ENCODE measurements at regions of chr3 and their contacts with region 1.

Region 1: GRCh38 chr3:54146506-54147239 is 24.3 kb downstream of the CACNA2D3 start:
- DNase-seq: peak; percentile 7 to 29 (median 14)
- ATAC-seq: peak; percentile 88
- H3K4me3 ChIP-seq: no peak overlapping the region
- H3K27ac ChIP-seq: no peak overlapping the region
- H3K4me1 ChIP-seq: no peaks in the 10 kb centered on the region
- H3K27me3 ChIP-seq: no peaks in the 10 kb centered on the region
- CTCF ChIP-seq: peak; percentile 47 to 65 (median 54); a peak in 5 of 6 replicates
- EP300 ChIP-seq: no peak
- POLR2A ChIP-seq: no peak
- RAD21 ChIP-seq: peak in 1 of 2 experiments; percentile 47; a peak in 2 of 4 replicates

Region 2: GRCh38 chr3:54374214-54374855 is 227.7 kb after region 1 on chr3:
- CTCF ChIA-PET with region 1: no interaction called
- POLR2A ChIA-PET with region 1: no interaction called
- in situ Hi-C with region 1: no loop called
- intact Hi-C with region 1: loop called (anchors 10 kb)
- DNase-seq: peak; percentile 8 to 18 (median 10)
- ATAC-seq: peak; percentile 56; the same call in 2 of the 3 replicates
- H3K4me3 ChIP-seq: no peak overlapping the region
- H3K27ac ChIP-seq: no peak overlapping the region
- H3K4me1 ChIP-seq: no peaks in the 10 kb centered on the region
- H3K27me3 ChIP-seq: no peaks in the 10 kb centered on the region
- CTCF ChIP-seq: peak; percentile 31 to 37 (median 35); a peak in 5 of 6 replicates
- EP300 ChIP-seq: no peak
- POLR2A ChIP-seq: no peak
- RAD21 ChIP-seq: peak in 1 of 2 experiments; percentile 35; a peak in 2 of 4 replicates